Activated CD4-positive, alpha-beta memory T cell treated with anti-CD3 and anti-CD28 coated beads, Interleukin-2, amount 10 ng/mL, durations not matched to agents 7 days and 5 days (primary cell): ENCODE measurements at regions of chr6 and their contacts with region 1.

Region 1: GRCh38 chr6:31739639-31740396 is at the start of gene MSH5:
- DNase-seq: peak; percentile 98
- H3K4me3 Mint-ChIP-seq: peak within 1 kb of the TSS; percentile 99
- H3K27ac Mint-ChIP-seq: peak within 1 kb of the TSS; percentile 95
- H3K4me1 Mint-ChIP-seq: peaks cover 52% of the 10 kb centered on the region
- H3K27me3 Mint-ChIP-seq: no peaks in the 10 kb centered on the region
- total RNA-seq, gene MSH5: 60.1 to 63.2 TPM

Region 2: GRCh38 chr6:31575335-31575901 is 164.4 kb before region 1 on chr6 and contains the start of gene TNF:
- CTCF ChIA-PET with region 1: no interaction called
- POLR2A ChIA-PET with region 1: interaction called, 54 read pairs
- DNase-seq: peak; percentile 91
- H3K4me3 Mint-ChIP-seq: peak within 1 kb of the TSS; percentile 94
- H3K27ac Mint-ChIP-seq: peak within 1 kb of the TSS; percentile 96
- H3K4me1 Mint-ChIP-seq: peaks cover 73% of the 10 kb centered on the region
- H3K27me3 Mint-ChIP-seq: peaks cover 2% of the 10 kb centered on the region
- total RNA-seq, gene TNF: 124 to 130 TPM

Region 3: GRCh38 chr6:31660381-31661261 is 79.2 kb before region 1 on chr6 and contains the start of gene C6orf47:
- CTCF ChIA-PET with region 1: interaction called, 11 read pairs
- POLR2A ChIA-PET with region 1: interaction called, 130 read pairs
- DNase-seq: peak; percentile 82
- H3K4me3 Mint-ChIP-seq: peak within 1 kb of the TSS; percentile 95
- H3K27ac Mint-ChIP-seq: peak within 1 kb of the TSS; percentile 95
- H3K4me1 Mint-ChIP-seq: peaks cover 83% of the 10 kb centered on the region
- H3K27me3 Mint-ChIP-seq: no peaks in the 10 kb centered on the region
- total RNA-seq, gene C6orf47: 26.4 to 26.7 TPM

Region 4: DNA sequence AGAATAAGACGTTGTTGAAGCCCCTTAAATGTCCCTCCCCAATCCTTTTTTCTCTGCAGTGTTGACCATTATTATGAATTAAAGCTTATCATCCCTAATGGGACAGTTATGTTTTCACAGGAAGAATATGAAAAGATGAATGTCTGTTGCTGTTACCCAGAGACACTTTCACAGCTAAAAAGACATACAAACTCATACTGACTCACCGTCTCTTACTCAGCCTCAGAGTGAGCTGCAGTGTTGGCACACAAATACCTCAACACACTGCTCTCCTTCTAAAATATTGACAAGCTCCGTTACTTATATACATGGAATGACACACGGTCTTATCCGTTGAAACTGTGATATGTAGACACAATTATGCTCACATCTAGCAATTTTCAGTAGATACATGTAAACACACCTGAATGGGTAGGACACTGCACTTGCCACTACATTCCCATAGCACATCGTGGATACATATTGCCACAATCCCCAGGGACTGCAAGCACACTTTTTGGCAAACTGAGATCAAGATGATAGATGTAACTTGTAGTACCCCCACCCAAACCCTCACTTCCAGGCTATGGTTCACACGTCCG is 13.0 kb after region 1 on chr6:
- CTCF ChIA-PET with region 1: interaction called, 5 read pairs
- POLR2A ChIA-PET with region 1: interaction called, 27 read pairs
- DNase-seq: no peak
- H3K4me3 Mint-ChIP-seq: no peak overlapping the region
- H3K27ac Mint-ChIP-seq: no peak overlapping the region
- H3K4me1 Mint-ChIP-seq: no peaks in the 10 kb centered on the region
- H3K27me3 Mint-ChIP-seq: no peaks in the 10 kb centered on the region

Region 5: GRCh38 chr6:31806465-31807272 is 66.9 kb after region 1 on chr6 and contains the start of gene LSM2:
- CTCF ChIA-PET with region 1: interaction called, 11 read pairs
- POLR2A ChIA-PET with region 1: interaction called, 98 read pairs
- DNase-seq: peak; percentile 98
- H3K4me3 Mint-ChIP-seq: peak within 1 kb of the TSS; percentile 91
- H3K27ac Mint-ChIP-seq: peak within 1 kb of the TSS; percentile 91
- H3K4me1 Mint-ChIP-seq: peaks cover 43% of the 10 kb centered on the region
- H3K27me3 Mint-ChIP-seq: no peaks in the 10 kb centered on the region
- total RNA-seq, gene LSM2: 100 to 108 TPM

Region 6: DNA sequence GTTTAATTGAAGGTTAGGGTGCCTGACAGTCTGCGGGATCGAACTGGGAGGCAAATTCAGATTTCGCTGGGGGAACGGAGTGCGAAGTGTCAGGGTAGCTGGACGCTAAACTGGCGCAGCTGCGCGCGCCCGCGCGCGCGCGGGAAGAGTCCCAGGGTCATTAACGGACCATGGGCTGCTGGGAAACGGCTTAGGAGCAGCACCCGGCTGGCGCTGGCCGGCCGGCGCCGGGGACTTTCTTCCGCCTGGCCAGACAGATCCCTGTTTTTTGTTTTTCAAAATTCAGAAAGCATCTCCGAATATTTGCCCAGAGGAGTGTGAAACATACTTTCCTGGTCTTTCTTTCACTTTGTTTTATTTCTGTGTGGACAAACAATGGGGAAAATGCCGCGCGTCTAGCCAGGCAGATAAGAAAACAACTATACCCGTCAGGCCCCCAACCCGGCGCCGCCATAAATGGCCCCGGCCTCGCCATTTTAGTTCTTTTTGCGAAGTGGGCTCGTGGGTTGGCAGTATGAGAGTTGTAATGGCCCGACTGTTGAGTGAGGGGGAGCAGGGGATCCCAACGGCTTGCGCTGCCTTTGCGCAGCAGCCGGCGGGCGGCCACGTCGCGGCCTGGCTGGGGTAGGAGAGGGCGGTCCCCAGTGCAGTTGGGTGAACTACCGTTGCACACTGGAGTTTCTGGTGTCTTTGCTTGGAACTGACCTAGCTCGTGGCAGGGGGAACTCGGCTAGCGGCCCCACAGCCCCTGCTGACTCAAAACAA is 94.8 kb after region 1 on chr6:
- CTCF ChIA-PET with region 1: interaction called, 61 read pairs
- POLR2A ChIA-PET with region 1: interaction called, 119 read pairs
- DNase-seq: peak; percentile 79
- H3K4me3 Mint-ChIP-seq: peak overlapping the region; percentile 81
- H3K27ac Mint-ChIP-seq: peak overlapping the region; percentile 91
- H3K4me1 Mint-ChIP-seq: peaks cover 56% of the 10 kb centered on the region
- H3K27me3 Mint-ChIP-seq: no peaks in the 10 kb centered on the region